Astrocyte of the spinal cord (primary cell): ENCODE measurements at regions of chr11 and their contacts with region 1.

Region 1: GRCh38 chr11:64000026-64000739 is 13.9 kb downstream of the OTUB1 start:
- DNase-seq: peak; percentile 65
- H3K4me3 ChIP-seq: no peak overlapping the region
- CTCF ChIP-seq: peak; percentile 66

Region 2: GRCh38 chr11:64074239-64074638 is 74.1 kb after region 1 on chr11:
- in situ Hi-C with region 1: no loop called
- DNase-seq: no peak
- H3K4me3 ChIP-seq: no peak overlapping the region
- CTCF ChIP-seq: no peak

Region 3: GRCh38 chr11:64110465-64111375 is 110.5 kb after region 1 on chr11:
- in situ Hi-C with region 1: loop called (anchors 10 kb)
- DNase-seq: no peak
- H3K4me3 ChIP-seq: no peak overlapping the region
- CTCF ChIP-seq: no peak

Region 4: GRCh38 chr11:64165849-64166635 is 165.9 kb after region 1 on chr11 and contains the start of gene MACROD1:
- in situ Hi-C with region 1: loop called (anchors 10 kb)
- DNase-seq: peak; percentile 71
- H3K4me3 ChIP-seq: peak within 1 kb of the TSS; percentile 63
- CTCF ChIP-seq: no peak